ENCODE measurements at regions of chr15 and their contacts with region 1.

Region 1: DNA sequence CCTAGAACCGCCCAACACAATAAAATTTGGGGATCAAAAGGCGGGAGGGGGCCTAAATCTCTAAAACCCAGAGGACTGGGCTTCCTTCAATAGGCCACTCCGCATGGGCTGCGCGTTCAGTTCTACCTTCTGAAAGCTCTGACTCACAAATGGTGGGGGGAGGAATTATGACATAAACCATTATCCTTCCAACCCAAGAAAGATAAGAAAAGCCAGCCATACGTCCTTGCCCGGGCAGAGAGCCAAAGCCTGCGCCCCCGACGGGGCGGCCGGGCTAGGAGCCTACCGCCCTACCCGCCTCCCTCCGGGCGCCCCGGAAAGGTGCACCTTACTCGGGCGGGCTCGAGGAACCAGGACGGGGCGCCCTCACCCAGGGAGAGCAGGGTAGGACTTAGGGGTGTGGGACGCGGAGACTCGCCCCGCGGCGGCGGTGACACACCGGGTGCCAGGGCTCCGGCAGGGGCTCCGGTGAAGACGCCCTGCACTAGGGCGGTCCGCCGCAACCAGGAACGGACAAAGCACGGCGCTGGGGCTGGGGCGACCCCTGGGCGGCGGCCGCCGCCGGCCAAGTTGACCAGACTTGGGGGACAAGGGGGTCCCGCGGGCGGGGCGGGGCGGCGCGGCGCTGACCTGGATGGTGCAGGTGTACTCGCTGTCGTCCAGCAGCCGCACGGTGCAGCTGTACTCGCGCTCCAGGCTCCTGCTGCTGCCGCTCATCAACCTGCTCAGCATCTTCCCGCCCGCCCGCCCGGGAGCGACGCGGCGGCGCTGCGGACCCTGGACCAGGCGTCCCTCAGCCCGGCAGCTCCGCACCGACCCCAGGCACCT is 534 bp downstream of the FRMD5 start:
- DNase-seq: peak; percentile 70
- ATAC-seq: peak; percentile 53

Region 2: GRCh38 chr15:43791993-43792760 is 402.4 kb before region 1 on chr15 and contains the start of gene SERF2:
- intact Hi-C with region 1: loop called (anchors 5 kb)
- DNase-seq: peak; percentile 100
- ATAC-seq: peak; percentile 97
- total RNA-seq, gene SERF2: 1,102 TPM

Region 3: DNA sequence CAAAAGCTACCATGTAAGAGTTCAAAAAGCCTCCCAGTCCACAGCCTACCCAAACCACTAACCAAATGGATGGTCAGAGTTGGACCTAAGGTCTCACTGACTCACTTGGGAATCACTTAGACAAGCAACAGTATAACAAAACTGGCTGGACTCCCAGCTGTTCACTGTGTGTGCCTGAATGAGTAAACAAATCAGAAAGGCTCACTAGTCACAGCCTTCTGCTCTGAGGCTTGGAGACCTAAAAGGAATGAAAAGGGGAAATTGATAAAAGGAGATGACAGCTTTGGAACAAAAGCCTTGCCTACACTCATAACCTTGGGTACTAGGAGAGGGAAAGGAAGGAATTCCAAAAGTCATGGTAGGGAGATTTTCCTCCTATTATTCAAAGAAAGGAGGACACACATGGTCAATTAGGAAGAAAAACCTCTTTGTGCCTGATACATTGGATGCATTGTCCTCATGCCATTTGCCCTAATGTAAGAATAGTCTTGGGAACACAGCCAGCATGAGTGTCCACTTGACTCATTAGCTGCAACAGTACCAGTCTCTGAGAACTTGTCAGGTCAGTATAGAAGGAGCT is 91.8 kb before region 1 on chr15:
- intact Hi-C with region 1: loop called (anchors 5 kb)
- DNase-seq: no peak
- ATAC-seq: peak; percentile 79

Measured in Right ventricle myocardium inferior (tissue), 1 donor.